Natural killer cell (primary cell): ENCODE measurements at regions of chr2 and their contacts with region 1.

Region 1: GRCh38 chr2:210445116-210445707 is 31.3 kb downstream of the LANCL1 start:
- DNase-seq: peak in 1 of 2 donors; percentile 37
- ATAC-seq: peak in 1 of 3 donors; percentile 34
- H3K4me3 ChIP-seq: no peak overlapping the region
- H3K4me3 Mint-ChIP-seq: no peak overlapping the region
- H3K27ac ChIP-seq: no peak overlapping the region
- H3K27ac Mint-ChIP-seq: no peak overlapping the region
- H3K4me1 ChIP-seq: no peaks in the 10 kb centered on the region
- H3K4me1 Mint-ChIP-seq: peaks cover 25 to 35% of the 10 kb centered on the region in 2 donors
- H3K27me3 ChIP-seq: no peaks in the 10 kb centered on the region
- H3K27me3 Mint-ChIP-seq: no peaks in the 10 kb centered on the region
- CTCF ChIP-seq: peak; percentile 94

Region 2: DNA sequence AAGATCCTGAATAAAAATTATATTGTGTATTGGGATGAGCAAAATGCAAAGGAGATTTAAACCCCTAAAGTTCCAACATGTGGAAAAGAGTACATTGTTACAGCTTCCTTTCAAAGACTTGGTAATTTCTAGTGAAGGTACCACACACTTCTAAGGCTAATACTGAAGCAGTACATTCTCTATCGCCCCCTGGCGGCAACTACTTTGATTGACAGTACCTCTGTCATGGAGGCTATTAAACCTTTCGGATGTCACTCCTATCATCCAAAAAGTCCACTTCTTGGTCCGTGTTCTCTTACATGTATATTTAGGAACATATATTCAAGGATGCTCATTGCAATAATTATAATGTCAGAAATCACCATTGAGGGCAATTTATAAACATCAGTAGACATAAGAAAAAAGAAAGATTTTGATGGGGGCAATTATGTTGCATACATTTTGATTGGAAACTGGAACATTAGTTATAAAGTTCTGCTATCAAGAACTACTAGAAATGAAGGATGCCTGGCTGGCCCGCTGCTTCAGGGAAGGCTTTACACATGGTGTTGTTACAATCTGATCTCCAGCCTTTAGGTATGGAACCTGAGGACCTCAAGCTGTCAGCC is 712.7 kb after region 1 on chr2:
- intact Hi-C with region 1: loop called (anchors 5 kb)
- DNase-seq: peak; percentile 21 to 66
- ATAC-seq: peak; percentile 29 to 60 (median 55)
- H3K4me3 ChIP-seq: no peak overlapping the region
- H3K4me3 Mint-ChIP-seq: no peak overlapping the region
- H3K27ac ChIP-seq: no peak overlapping the region
- H3K27ac Mint-ChIP-seq: no peak overlapping the region
- H3K4me1 ChIP-seq: no peaks in the 10 kb centered on the region
- H3K4me1 Mint-ChIP-seq: no peaks in the 10 kb centered on the region
- H3K27me3 ChIP-seq: no peaks in the 10 kb centered on the region
- H3K27me3 Mint-ChIP-seq: no peaks in the 10 kb centered on the region
- CTCF ChIP-seq: peak; percentile 35